ENCODE measurements at regions of chr7 and their contacts with region 1.

Region 1: DNA sequence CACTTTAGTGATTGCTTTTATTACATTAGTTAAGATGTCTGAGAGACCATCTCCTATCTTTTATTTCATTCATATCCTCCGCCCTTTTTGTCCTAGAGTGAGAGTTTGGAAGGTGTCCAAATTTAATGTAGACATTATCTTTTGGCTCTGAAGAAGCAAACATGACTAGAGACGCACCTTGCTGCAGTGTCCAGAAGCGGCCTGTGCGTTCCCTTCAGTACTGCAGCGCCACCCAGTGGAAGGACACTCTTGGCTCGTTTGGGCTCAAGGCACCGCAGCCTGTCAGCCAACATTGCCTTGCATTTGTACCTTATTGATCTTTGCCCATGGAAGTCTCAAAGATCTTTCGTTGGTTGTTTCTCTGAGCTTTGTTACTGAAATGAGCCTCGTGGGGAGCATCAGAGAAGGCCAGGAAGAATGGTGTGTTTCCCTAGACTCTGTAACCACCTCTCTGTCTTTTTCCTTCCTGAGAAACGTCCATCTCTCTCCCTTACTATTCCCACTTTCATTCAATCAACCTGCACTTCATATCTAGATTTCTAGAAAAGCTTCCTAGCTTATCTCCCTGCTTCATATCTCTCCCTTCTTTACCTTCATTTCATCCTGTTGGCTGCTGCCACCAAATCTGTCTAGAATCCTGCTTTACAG is 10.4 kb upstream of the CLCN1 start:
- H3K4me3 Mint-ChIP-seq: no peak overlapping the region
- H3K27ac Mint-ChIP-seq: peak overlapping the region; percentile 49
- H3K4me1 Mint-ChIP-seq: peaks cover 82% of the 10 kb centered on the region
- H3K27me3 Mint-ChIP-seq: no peaks in the 10 kb centered on the region

Region 2: GRCh38 chr7:143008007-143008901 is 297.3 kb before region 1 on chr7:
- intact Hi-C with region 1: loop called (anchors 10 kb)
- H3K4me3 Mint-ChIP-seq: no peak overlapping the region
- H3K27ac Mint-ChIP-seq: no peak overlapping the region
- H3K4me1 Mint-ChIP-seq: peaks cover 13% of the 10 kb centered on the region
- H3K27me3 Mint-ChIP-seq: no peaks in the 10 kb centered on the region

Region 3: DNA sequence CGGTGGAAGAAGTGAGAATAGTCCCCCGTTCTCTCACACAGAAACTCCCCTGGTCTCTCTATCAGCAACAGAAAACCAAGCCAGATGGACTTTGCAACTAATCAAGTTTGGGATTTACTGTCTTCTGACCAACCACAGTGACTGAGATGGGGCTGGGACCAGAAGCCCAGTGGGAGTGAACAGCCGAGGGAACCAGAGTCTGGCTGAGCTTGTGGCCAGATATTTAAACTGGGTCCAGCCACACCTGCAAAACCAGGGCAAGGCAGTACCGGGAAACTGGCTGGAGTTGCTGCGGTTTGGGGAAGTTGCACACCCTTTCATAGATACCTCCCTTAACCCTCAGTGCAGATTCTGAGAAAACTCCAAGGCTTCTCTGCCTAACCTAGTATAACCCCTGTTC is 36.3 kb before region 1 on chr7:
- intact Hi-C with region 1: no loop called
- H3K4me3 Mint-ChIP-seq: no peak overlapping the region
- H3K27ac Mint-ChIP-seq: no peak overlapping the region
- H3K4me1 Mint-ChIP-seq: peaks cover 44% of the 10 kb centered on the region
- H3K27me3 Mint-ChIP-seq: no peaks in the 10 kb centered on the region